ENCODE measurements at regions of chr18 and their contacts with region 1.

Region 1: DNA sequence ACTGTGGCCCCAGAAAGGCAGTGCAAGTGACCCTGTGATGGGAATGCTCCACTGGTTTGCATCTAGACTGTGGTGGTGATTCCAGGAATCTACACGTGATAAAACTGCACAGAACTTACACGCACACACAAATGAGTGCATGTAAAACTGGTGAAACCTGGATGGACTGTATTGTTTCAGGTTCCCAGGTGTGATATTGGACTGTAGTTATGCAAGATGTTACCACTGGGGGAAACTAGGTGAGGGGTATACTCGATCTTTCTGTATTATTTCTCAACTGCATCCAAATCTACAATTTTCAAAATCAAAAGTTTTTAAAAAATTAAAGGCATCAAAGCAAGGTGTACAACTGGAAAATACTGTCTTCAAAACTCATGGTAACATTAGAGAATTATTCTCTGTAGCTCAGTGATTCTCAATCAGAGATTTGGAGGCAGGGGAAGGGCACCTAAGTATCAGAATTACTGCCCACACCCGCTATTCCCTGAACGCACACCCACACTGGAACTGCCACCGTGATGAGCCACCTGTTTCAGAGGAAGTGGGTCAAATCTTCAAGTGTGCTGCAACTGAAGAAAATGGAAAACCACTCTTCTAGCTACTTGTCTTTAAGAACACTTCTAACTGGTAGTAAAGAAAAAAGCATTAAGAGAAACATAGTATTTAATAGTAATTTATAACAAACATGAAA is 26.7 kb downstream of the PTPN2 start:
- DNase-seq: peak; percentile 76
- H3K4me3 Mint-ChIP-seq: peak overlapping the region; percentile 18
- H3K27ac Mint-ChIP-seq: peak overlapping the region; percentile 84
- H3K4me1 Mint-ChIP-seq: peaks cover 64% of the 10 kb centered on the region
- H3K27me3 Mint-ChIP-seq: no peaks in the 10 kb centered on the region

Region 2: GRCh38 chr18:12155996-12156395 is 701.4 kb before region 1 on chr18:
- CTCF ChIA-PET with region 1: no interaction called
- POLR2A ChIA-PET with region 1: no interaction called
- intact Hi-C with region 1: no loop called
- DNase-seq: no peak
- H3K4me3 Mint-ChIP-seq: no peak overlapping the region
- H3K27ac Mint-ChIP-seq: no peak overlapping the region
- H3K4me1 Mint-ChIP-seq: no peaks in the 10 kb centered on the region
- H3K27me3 Mint-ChIP-seq: no peaks in the 10 kb centered on the region

Region 3: GRCh38 chr18:12820506-12820905 is 36.9 kb before region 1 on chr18:
- CTCF ChIA-PET with region 1: no interaction called
- POLR2A ChIA-PET with region 1: interaction called, 3 read pairs
- intact Hi-C with region 1: loop called (anchors 5 kb)
- DNase-seq: no peak
- H3K4me3 Mint-ChIP-seq: no peak overlapping the region
- H3K27ac Mint-ChIP-seq: no peak overlapping the region
- H3K4me1 Mint-ChIP-seq: peaks cover 21% of the 10 kb centered on the region
- H3K27me3 Mint-ChIP-seq: no peaks in the 10 kb centered on the region

Measured in activated CD4-positive, alpha-beta memory T cell treated with anti-CD3 and anti-CD28 coated beads for 36 hours (primary cell).